ENCODE measurements at regions of chr18 and their contacts with region 1.

Region 1: GRCh38 chr18:45722899-45723298 is 1.1 kb upstream of the SLC14A1 start:
- DNase-seq: peak; percentile 91
- H3K4me3 Mint-ChIP-seq: no peak overlapping the region
- H3K27ac Mint-ChIP-seq: no peak overlapping the region
- H3K4me1 Mint-ChIP-seq: no peaks in the 10 kb centered on the region
- H3K27me3 Mint-ChIP-seq: peaks cover 31% of the 10 kb centered on the region

Region 2: DNA sequence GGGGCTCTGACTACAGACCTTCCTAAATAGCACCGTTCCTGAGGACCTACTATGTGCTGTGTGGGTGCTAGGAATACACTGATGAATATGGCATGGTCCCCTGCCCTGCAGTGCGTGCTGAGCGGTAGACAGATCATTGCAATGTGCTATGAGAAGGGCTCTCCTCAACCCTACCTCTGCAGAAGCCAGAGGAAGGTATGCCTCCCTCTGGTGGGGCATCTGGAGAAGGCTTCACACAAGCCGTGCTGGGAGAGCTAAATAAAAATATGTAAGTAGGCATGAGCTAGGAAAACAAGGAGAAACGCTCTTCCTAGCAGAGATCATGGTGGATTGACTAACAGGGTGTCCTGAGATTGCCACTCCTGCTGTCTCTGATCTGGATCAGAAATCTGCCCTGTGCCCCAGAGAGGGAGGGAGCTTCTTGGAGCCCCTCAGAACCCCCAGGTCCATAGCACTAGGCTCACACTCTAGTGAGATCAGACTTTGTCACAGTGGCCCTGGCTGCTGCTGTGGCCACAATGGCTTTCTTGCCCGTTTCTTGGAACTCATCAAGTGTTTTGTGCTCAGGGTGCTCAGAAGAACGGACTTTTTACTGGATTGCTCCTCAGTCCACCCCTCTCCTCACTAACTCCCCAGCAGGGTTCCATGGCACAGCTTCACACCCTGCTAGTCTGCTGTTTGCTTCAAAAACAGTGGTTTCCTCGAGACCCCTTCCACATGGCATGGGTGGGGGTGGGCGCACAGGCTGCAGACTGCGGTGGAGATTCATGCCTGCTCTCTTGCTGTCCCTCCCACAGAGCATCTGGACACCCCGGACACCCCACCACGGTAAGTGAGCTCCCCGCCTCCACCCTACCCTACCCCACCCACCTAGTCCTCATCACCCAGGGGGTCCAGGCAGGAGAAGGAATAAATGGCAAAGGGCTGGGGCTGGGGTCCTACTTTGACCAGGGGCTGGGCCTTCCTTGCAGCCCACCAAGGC is 116.8 kb after region 1 on chr18:
- intact Hi-C with region 1: loop called (anchors 5 kb)
- DNase-seq: peak; percentile 69
- H3K4me3 Mint-ChIP-seq: no peak overlapping the region
- H3K27ac Mint-ChIP-seq: no peak overlapping the region
- H3K4me1 Mint-ChIP-seq: peaks cover 5% of the 10 kb centered on the region
- H3K27me3 Mint-ChIP-seq: peaks cover 57% of the 10 kb centered on the region

Region 3: DNA sequence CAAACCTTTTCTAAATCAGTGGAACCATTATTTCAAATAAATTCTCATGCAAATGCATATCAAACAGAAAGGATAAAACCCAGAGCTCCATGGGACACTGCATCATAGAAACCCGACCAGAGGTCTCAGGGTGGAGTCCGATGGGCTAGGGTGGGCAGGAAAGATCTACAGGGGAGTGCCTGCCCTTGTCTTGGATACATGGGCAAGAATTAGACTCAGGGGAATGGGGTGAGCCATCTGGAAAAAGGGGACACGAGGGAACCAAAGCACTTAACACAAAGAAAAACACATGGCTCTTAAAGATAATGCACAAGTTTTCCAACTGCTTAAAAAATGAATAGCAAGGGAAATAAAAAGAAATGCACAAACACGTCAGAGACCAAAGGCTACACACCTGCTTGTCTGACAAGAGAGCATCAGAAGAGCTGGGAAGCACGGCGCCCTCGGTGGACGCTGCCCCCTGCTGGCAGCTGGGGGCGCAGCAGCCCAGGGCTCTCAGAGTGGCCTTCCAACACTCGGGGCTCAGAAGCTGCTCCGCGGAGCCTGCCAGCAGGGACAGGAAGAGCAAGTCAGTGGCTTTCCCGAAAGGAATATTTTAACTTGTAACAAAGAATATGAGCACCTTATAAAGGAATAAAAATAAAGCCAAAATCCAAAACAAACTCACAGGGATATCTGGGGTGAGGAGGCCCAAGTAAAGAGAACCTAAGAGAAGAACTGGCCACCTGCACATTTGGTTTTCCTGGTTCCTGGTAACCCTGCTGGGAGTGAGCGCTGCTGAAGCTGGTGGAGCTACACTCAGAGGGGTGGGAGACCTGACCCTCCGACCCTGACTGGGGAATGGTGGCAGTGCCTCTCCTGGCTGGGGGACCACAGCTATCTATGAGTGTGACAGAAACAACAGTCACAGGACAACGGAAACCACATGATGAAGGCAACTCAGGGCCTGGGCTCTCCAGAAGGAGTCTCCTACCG is 157.1 kb after region 1 on chr18:
- intact Hi-C with region 1: loop called (anchors 1 kb)
- DNase-seq: peak; percentile 92
- H3K4me3 Mint-ChIP-seq: no peak overlapping the region
- H3K27ac Mint-ChIP-seq: no peak overlapping the region
- H3K4me1 Mint-ChIP-seq: peaks cover 10% of the 10 kb centered on the region
- H3K27me3 Mint-ChIP-seq: no peaks in the 10 kb centered on the region

Measured in activated CD4-positive, alpha-beta T cell treated with anti-CD3 and anti-CD28 coated beads, Interleukin-2, amount 10 ng/mL, durations not matched to agents 24 days and 14 days (primary cell).